AG04449 (cell line): ENCODE measurements at regions of chr17 and their contacts with region 1.

Region 1: GRCh38 chr17:28416703-28417311 is 10.8 kb upstream of the SLC46A1 start:
- DNase-seq: no peak
- H3K4me3 ChIP-seq: no peak overlapping the region
- CTCF ChIP-seq: peak; percentile 73

Region 2: GRCh38 chr17:28398280-28398981 is 18.4 kb before region 1 on chr17:
- CTCF ChIA-PET with region 1: interaction called, 55 read pairs
- POLR2A ChIA-PET with region 1: no interaction called
- DNase-seq: no peak
- H3K4me3 ChIP-seq: no peak overlapping the region
- CTCF ChIP-seq: no peak

Region 3: GRCh38 chr17:28405632-28406472 is 11.0 kb before region 1 on chr17 and contains the start of gene SLC46A1:
- CTCF ChIA-PET with region 1: interaction called, 55 read pairs
- POLR2A ChIA-PET with region 1: no interaction called
- DNase-seq: no peak
- H3K4me3 ChIP-seq: peak within 1 kb of the TSS; percentile 77
- CTCF ChIP-seq: no peak

Region 4: GRCh38 chr17:28433721-28434120 is 16.9 kb after region 1 on chr17:
- CTCF ChIA-PET with region 1: interaction called, 37 read pairs
- POLR2A ChIA-PET with region 1: no interaction called
- DNase-seq: no peak
- H3K4me3 ChIP-seq: no peak overlapping the region
- CTCF ChIP-seq: no peak

Region 5: DNA sequence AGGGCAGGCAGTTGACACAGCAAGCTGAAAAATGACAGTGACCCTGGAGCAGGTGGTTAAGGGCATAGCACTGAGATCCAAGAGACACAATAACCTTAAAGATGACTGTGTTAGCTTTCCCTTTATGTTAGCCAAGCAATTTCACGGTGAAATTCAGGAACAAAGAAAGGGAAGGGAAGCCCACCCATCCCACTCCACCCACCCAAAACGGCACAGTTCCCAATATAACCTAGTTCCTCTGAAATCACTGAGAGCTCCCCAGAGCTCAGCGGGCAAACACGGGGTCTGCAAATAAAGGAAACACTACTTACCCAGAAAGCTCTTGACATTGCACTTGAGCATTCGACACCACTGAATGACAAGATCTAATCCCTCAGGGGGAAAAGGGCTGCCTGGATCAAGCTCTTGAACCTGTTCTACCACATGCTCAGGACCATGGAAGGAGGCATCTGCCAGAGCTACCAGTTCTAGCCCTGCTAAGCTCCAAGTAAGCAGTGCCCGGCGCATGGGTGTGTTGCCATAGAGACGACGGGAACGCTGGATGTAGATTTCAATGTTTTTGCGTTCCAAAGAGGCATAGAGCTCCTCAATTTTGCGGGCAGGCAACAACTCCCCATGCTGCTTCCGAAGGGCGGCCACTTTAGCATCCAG is 217.5 kb after region 1 on chr17:
- CTCF ChIA-PET with region 1: no interaction called
- POLR2A ChIA-PET with region 1: no interaction called
- DNase-seq: no peak
- H3K4me3 ChIP-seq: no peak overlapping the region
- CTCF ChIP-seq: no peak